Ascending aorta (tissue), 2 donors: ENCODE measurements at regions of chr4 and their contacts with region 1.

Region 1: GRCh38 chr4:173370477-173371291 is at the start of gene SAP30:
- DNase-seq: peak; percentile 94 to 99
- H3K4me3 ChIP-seq: peak within 1 kb of the TSS; percentile 77 to 79
- H3K27ac ChIP-seq: peak within 1 kb of the TSS; percentile 92 to 97
- H3K4me1 ChIP-seq: peaks cover 3 to 21% of the 10 kb centered on the region in 2 donors
- H3K27me3 ChIP-seq: no peaks in the 10 kb centered on the region
- CTCF ChIP-seq: no peak
- total RNA-seq, gene SAP30: 9.3 TPM

Region 2: DNA sequence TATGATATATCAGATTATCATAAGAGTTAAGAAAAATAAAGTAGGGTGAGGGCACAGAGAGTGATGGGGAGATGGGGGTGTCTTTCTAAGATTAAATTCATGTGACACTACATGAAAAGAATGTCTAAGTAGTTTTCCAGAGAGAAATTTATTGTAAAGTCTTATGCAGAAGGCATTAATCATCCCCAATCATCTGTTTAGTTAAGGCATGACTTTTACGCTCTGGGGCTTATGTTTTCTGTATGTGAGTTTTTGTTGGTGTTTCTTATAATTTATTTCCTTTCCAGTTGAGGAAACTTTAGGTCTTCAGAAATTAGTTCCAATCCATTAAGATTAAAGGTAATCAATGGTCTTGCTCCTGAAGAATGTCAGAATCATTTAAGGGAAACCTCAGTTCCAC is 585.1 kb before region 1 on chr4:
- intact Hi-C with region 1: no loop called
- DNase-seq: no peak
- H3K4me3 ChIP-seq: no peak overlapping the region
- H3K27ac ChIP-seq: no peak overlapping the region
- H3K4me1 ChIP-seq: peaks cover 0 to 4% of the 10 kb centered on the region in 2 donors
- H3K27me3 ChIP-seq: no peaks in the 10 kb centered on the region
- CTCF ChIP-seq: no peak

Region 3: GRCh38 chr4:173318648-173319211 is 52.0 kb before region 1 on chr4:
- intact Hi-C with region 1: loop called (anchors 5 kb)
- DNase-seq: no peak
- H3K4me3 ChIP-seq: no peak overlapping the region
- H3K27ac ChIP-seq: no peak overlapping the region
- H3K4me1 ChIP-seq: no peaks in the 10 kb centered on the region
- H3K27me3 ChIP-seq: no peaks in the 10 kb centered on the region
- CTCF ChIP-seq: peak in 1 of 3 experiments; percentile 50

Region 4: DNA sequence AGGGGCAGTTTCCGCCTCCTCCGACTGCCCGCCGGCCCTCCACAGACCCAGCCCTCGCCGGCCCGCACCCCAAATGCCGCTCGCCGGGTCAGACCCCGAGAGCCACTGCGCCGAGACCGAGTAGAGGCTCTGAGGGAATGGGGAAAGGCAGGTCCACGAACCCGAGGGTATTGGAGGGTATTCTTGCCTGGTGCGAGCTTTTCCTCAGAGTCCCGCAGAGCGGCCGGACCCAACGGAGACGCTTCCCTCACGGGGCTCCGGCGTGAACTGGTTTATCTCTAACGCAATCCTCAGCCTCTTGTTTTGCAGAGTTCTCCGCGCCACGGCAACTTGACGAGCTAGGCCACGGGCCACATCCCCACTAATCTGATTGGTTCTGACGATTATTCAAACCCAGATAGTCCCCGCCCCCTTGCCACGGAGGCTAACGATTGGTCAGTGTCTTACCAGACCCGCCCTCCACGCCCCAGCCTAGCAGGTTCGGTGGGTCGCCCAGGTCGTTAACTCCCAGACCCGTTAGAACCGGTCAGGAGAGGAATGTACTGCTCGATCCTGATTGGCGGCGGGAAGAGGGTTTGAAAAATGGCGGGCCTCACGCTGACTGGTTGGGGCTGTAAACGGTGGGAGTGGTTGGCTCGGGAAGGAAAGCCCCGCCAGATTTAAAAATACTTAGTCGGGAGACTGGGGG is 36.5 kb before region 1 on chr4 and contains the start of gene HMGB2:
- intact Hi-C with region 1: loop called (anchors 1 kb)
- DNase-seq: peak; percentile 100
- H3K4me3 ChIP-seq: peak within 1 kb of the TSS; percentile 97 to 99
- H3K27ac ChIP-seq: peak within 1 kb of the TSS; percentile 93 to 98
- H3K4me1 ChIP-seq: peaks cover 0 to 17% of the 10 kb centered on the region in 2 donors
- H3K27me3 ChIP-seq: no peaks in the 10 kb centered on the region
- CTCF ChIP-seq: no peak
- total RNA-seq, gene HMGB2: 36.1 TPM

Region 5: GRCh38 chr4:173398779-173399415 is 28.2 kb after region 1 on chr4 and contains the start of gene SCRG1:
- intact Hi-C with region 1: loop called (anchors 1 kb)
- DNase-seq: no peak
- H3K4me3 ChIP-seq: peak within 1 kb of the TSS; percentile 24 to 59
- H3K27ac ChIP-seq: peak within 1 kb of the TSS; percentile 67 to 75
- H3K4me1 ChIP-seq: peaks cover 0 to 16% of the 10 kb centered on the region in 2 donors
- H3K27me3 ChIP-seq: no peaks in the 10 kb centered on the region
- CTCF ChIP-seq: no peak
- total RNA-seq, gene SCRG1: 2.3 TPM

Region 6: DNA sequence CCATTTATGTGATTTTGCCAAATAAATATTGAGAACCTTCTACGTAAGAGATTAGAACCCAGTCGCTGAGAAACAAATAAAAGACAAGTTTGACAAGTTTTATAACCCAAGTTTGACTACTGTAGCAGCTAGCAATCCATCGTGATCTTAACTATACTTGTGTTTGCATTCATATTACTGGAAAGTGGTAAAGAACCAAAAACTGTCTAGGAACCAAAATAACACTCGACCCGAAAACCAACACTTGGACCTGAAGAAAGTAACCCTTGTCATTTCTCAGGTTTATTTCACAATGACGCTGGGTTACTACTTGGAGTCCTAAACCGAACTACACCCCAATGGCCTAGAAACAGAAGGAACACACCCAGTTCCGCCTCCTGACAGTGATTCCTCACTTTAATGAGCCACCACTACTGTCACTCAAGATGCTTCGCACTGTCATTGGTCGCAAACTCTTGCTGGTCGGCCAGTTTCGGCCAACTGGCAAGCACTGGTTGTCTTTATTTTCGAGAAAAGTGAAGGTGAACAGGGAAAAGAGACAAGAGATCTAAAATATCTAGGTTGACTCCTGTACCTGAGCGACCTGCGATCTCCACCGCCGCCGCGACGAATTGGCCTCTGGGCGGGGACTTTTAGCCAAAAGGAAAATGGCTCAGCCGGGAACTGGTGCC is 912.3 kb after region 1 on chr4:
- intact Hi-C with region 1: loop called (anchors 1 kb)
- DNase-seq: peak; percentile 57 to 92
- H3K4me3 ChIP-seq: peak overlapping the region; percentile 84 to 96
- H3K27ac ChIP-seq: peak overlapping the region; percentile 96 to 98
- H3K4me1 ChIP-seq: peaks cover 0 to 13% of the 10 kb centered on the region in 2 donors
- H3K27me3 ChIP-seq: no peaks in the 10 kb centered on the region
- CTCF ChIP-seq: no peak